ENCODE measurements at regions of chr20 and their contacts with region 1.

Region 1: GRCh38 chr20:37534401-37535157 is 6.9 kb upstream of the BLCAP start:
- DNase-seq: peak; percentile 52
- ATAC-seq: peak; percentile 96
- H3K4me3 Mint-ChIP-seq: no peak overlapping the region
- H3K27ac Mint-ChIP-seq: no peak overlapping the region
- H3K4me1 Mint-ChIP-seq: no peaks in the 10 kb centered on the region
- H3K27me3 Mint-ChIP-seq: peaks cover 10% of the 10 kb centered on the region

Region 2: GRCh38 chr20:37192137-37192854 is 342.3 kb before region 1 on chr20:
- CTCF ChIA-PET with region 1: interaction called, 11 read pairs
- POLR2A ChIA-PET with region 1: no interaction called
- intact Hi-C with region 1: loop called (anchors 1 kb)
- DNase-seq: peak; percentile 83
- ATAC-seq: peak; percentile 72
- H3K4me3 Mint-ChIP-seq: no peak overlapping the region
- H3K27ac Mint-ChIP-seq: peak overlapping the region; percentile 49
- H3K4me1 Mint-ChIP-seq: peaks cover 76% of the 10 kb centered on the region
- H3K27me3 Mint-ChIP-seq: no peaks in the 10 kb centered on the region

Region 3: GRCh38 chr20:37202267-37202943 is 332.2 kb before region 1 on chr20:
- CTCF ChIA-PET with region 1: interaction called, 4 read pairs
- POLR2A ChIA-PET with region 1: no interaction called
- intact Hi-C with region 1: loop called in 1 of 2 experiments (anchors 2 kb)
- DNase-seq: peak; percentile 32
- ATAC-seq: peak; percentile 53
- H3K4me3 Mint-ChIP-seq: no peak overlapping the region
- H3K27ac Mint-ChIP-seq: no peak overlapping the region
- H3K4me1 Mint-ChIP-seq: no peaks in the 10 kb centered on the region
- H3K27me3 Mint-ChIP-seq: no peaks in the 10 kb centered on the region

Region 4: DNA sequence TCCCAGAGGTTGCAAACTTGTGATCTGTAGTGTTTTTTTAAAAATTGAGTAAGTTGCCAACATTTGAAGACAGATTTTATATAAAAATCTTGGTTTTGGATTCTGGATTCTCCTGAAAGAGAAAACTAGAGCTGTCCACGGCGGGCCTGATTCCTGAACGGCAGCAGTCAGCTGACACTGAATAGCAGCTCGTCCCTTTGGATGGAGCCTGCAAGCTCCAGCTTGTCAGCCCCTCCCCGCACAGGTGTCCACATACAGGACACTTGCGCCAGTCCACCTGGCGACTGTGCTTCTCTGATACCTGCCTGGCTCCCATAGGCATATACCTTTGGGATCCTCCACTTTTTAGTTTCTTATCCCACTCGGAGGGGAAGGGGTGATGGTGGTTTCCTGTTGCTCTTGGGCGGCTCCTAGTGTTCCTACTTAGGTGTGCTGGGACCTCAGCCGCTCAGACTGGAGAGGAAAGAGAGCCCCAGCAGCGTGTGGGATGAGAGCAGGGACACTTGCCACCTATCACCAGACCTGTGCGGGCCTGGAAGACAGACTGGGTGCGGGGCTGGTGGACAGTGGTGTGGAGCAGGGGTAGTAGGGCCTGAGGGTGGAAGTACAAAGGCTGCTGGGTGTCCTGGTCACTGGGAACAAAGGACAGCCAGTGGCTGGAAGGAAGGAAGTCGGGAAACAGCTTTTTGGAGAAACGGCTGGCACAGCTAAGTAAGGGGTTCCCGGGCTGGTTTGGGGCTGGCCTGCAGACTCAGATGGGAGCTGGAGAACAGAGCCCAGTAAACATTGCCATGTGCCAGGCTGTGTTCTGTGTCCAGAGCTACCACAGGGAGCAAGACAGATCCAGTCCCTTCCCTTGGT is 291.3 kb before region 1 on chr20:
- CTCF ChIA-PET with region 1: no interaction called
- POLR2A ChIA-PET with region 1: no interaction called
- intact Hi-C with region 1: no loop called
- DNase-seq: no peak
- ATAC-seq: no peak
- H3K4me3 Mint-ChIP-seq: no peak overlapping the region
- H3K27ac Mint-ChIP-seq: no peak overlapping the region
- H3K4me1 Mint-ChIP-seq: no peaks in the 10 kb centered on the region
- H3K27me3 Mint-ChIP-seq: no peaks in the 10 kb centered on the region

Region 5: GRCh38 chr20:37270576-37271420 is 263.8 kb before region 1 on chr20:
- CTCF ChIA-PET with region 1: interaction called, 16 read pairs
- POLR2A ChIA-PET with region 1: no interaction called
- intact Hi-C with region 1: loop called (anchors 1 kb)
- DNase-seq: no peak
- ATAC-seq: no peak
- H3K4me3 Mint-ChIP-seq: no peak overlapping the region
- H3K27ac Mint-ChIP-seq: no peak overlapping the region
- H3K4me1 Mint-ChIP-seq: no peaks in the 10 kb centered on the region
- H3K27me3 Mint-ChIP-seq: peaks cover 2% of the 10 kb centered on the region

Region 6: DNA sequence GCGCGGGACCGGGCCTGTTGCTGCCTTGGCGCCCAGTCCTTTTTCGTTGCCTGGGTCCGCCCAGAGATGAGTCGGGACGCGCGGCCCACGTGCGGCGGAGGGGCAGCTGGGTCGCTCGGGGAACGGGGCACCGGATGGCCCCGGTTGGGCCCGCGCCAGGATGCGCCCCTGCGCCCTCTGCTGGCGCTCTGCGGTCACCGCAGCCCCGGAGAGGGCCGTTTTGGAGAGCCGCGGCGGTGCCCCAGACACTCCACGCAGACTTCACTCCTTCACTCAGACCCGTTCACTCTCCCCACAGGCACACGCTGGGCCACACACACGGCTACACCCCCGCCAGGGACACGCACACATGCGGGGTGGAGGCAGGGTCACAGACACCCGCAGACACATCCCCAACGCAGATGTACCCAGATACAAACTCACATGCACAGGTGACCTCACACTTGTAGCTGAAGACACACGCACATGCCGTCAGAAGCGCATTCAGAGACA is 149.8 kb before region 1 on chr20:
- CTCF ChIA-PET with region 1: interaction called, 4 read pairs
- POLR2A ChIA-PET with region 1: no interaction called
- intact Hi-C with region 1: loop called in 1 of 2 experiments (anchors 2 kb)
- DNase-seq: peak; percentile 86
- ATAC-seq: peak; percentile 94
- H3K4me3 Mint-ChIP-seq: peak overlapping the region; percentile 59
- H3K27ac Mint-ChIP-seq: peak overlapping the region; percentile 43
- H3K4me1 Mint-ChIP-seq: peaks cover 8% of the 10 kb centered on the region
- H3K27me3 Mint-ChIP-seq: peaks cover 4% of the 10 kb centered on the region

Region 7: DNA sequence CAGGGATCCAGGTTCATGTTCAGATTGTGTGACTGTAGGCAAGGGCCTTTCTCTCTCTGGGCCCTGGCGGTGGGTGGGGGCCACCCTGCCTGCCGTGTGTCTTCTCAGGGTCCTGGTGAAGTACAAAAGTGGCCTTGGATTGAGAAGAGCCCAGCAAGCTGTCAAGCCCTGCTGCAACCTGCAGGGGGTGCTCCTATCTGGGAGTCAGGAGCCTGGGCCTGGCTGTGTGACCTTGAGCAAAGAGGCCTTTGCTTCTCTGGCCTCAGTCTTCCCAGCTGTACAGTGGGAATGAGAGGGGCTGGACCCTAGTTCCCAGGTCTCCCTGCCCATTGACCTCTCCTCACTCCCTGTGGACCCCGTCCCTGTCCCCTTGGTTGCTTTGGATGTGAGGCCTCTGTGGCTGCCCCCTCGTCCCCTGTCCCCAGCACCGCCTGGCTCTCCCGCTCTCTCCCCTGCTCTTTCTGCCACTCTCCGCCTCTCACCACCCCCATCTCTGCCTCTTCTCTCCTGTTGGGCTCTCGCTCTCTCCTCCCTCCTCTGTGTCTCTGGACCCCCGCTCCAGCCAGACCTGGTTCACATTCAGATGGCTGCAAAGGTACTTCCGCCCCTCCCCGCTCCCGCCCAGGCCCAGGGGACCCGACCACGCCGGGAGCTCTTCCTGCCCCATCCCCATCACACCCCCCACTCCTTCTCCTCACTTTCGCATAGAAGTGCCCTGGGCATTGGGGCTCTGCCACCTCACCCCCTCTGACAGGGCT is 142.0 kb before region 1 on chr20:
- CTCF ChIA-PET with region 1: interaction called, 3 read pairs
- POLR2A ChIA-PET with region 1: no interaction called
- intact Hi-C with region 1: loop called in 1 of 2 experiments (anchors 1 kb)
- DNase-seq: peak; percentile 65
- ATAC-seq: peak; percentile 60
- H3K4me3 Mint-ChIP-seq: no peak overlapping the region
- H3K27ac Mint-ChIP-seq: no peak overlapping the region
- H3K4me1 Mint-ChIP-seq: no peaks in the 10 kb centered on the region
- H3K27me3 Mint-ChIP-seq: no peaks in the 10 kb centered on the region

Region 8: DNA sequence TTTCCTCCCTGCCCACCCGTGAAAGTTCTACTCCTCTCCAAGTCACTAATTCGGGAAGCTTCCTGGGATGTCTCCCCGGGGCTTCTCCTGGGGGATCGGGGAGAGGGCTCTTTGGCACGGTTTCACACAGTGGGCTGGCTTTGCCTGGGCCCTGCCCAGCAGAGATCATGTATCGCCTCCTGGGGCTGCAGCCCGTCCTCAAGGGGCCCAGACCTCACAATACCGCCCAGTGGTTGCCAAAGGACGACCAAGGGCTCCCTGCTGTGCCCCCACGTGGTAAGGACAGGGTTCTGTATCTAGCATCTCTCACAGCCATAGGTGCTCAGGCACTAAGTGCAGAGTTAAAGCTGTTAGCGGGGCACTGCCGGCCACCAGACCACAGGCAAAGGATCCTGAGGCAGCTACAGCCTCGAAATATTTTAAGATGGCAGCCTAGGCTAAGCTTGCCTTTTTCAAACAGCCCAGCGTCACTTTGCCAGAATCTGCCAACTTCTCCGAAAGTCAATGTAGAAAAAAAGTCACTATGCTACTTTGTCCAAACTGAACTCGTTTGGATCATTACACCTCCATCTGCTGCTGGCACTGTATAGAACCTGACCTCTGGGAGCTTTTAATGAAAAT is 15.0 kb before region 1 on chr20:
- CTCF ChIA-PET with region 1: interaction called, 10 read pairs
- POLR2A ChIA-PET with region 1: interaction called, 3 read pairs
- intact Hi-C with region 1: no loop called
- DNase-seq: no peak
- ATAC-seq: no peak
- H3K4me3 Mint-ChIP-seq: no peak overlapping the region
- H3K27ac Mint-ChIP-seq: no peak overlapping the region
- H3K4me1 Mint-ChIP-seq: peaks cover 19% of the 10 kb centered on the region
- H3K27me3 Mint-ChIP-seq: no peaks in the 10 kb centered on the region